Activated CD4-positive, alpha-beta T cell treated with anti-CD3 and anti-CD28 coated beads for 36 hours (primary cell): ENCODE measurements at regions of chr12 and their contacts with region 1.

Region 1: DNA sequence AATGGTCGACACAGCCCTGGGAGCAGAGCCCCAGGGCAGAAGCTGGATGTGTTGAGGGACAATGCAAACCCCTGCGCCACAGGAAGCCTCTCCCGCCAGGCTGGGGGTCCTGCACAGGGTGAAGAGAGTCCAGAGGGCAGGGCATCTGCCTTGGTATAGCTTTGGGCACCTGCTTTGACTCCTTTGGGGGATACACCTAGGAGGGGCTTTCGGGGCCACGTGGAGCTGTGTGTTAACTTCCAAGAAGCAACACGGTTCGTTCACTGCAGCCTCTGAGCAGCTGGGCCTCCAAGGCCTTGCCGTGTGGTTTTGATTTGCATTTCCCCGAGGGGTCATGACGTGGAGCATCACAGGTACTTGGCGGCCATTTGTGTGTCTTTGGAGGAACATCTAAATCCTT is 5.8 kb upstream of the PUS1 start:
- DNase-seq: no peak
- ATAC-seq: no peak
- H3K4me3 Mint-ChIP-seq: no peak overlapping the region
- H3K27ac Mint-ChIP-seq: no peak overlapping the region
- H3K4me1 Mint-ChIP-seq: peaks cover 7% of the 10 kb centered on the region
- H3K27me3 Mint-ChIP-seq: no peaks in the 10 kb centered on the region

Region 2: DNA sequence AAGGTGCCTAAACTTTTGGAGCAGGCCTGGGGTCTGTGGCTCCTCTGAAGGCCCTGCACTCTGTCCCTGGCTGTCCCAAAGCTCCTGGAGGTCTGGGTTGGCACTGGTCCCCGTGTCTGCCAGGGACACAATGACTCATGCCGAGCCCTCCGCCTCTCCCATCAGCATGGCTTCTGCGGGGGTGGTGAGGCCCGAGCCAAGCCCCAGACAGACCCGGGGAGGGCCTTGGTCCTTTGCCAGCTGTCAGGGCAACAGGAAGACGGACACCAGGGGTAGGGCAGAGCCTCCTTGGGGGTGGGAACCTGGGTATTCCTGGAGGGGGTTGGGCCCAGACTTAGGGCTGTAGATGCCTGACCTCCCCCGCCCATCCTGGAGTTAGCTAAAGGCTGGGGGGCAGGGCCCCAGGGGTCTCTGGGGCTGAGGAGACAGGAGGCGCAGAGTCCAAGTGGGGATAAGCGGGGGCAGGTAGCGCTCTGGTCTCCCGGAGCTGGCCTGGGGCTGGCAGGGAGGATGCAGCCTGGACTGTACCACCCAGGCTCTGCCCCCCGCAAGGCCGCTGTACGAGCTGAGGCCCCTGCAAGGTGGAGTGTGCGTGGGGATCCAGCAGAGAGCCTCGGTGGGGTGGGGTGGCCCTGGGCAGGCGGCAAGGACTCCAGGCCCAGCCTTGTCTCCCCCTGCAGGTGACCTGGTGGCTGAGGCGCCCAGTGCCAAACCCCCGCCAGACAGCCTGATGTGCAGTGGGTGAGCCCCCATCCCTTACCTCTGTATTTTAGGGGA is 10.6 kb before region 1 on chr12:
- CTCF ChIA-PET with region 1: no interaction called
- POLR2A ChIA-PET with region 1: no interaction called
- intact Hi-C with region 1: no loop called
- DNase-seq: no peak
- ATAC-seq: no peak
- H3K4me3 Mint-ChIP-seq: no peak overlapping the region
- H3K27ac Mint-ChIP-seq: no peak overlapping the region
- H3K4me1 Mint-ChIP-seq: no peaks in the 10 kb centered on the region
- H3K27me3 Mint-ChIP-seq: no peaks in the 10 kb centered on the region

Region 3: GRCh38 chr12:131959641-131960589 is 36.7 kb after region 1 on chr12:
- CTCF ChIA-PET with region 1: no interaction called
- POLR2A ChIA-PET with region 1: no interaction called
- intact Hi-C with region 1: loop called in 1 of 2 experiments (anchors 5 kb)
- DNase-seq: no peak
- ATAC-seq: no peak
- H3K4me3 Mint-ChIP-seq: no peak overlapping the region
- H3K27ac Mint-ChIP-seq: peak overlapping the region; percentile 40
- H3K4me1 Mint-ChIP-seq: peaks cover 66% of the 10 kb centered on the region
- H3K27me3 Mint-ChIP-seq: no peaks in the 10 kb centered on the region

Region 4: DNA sequence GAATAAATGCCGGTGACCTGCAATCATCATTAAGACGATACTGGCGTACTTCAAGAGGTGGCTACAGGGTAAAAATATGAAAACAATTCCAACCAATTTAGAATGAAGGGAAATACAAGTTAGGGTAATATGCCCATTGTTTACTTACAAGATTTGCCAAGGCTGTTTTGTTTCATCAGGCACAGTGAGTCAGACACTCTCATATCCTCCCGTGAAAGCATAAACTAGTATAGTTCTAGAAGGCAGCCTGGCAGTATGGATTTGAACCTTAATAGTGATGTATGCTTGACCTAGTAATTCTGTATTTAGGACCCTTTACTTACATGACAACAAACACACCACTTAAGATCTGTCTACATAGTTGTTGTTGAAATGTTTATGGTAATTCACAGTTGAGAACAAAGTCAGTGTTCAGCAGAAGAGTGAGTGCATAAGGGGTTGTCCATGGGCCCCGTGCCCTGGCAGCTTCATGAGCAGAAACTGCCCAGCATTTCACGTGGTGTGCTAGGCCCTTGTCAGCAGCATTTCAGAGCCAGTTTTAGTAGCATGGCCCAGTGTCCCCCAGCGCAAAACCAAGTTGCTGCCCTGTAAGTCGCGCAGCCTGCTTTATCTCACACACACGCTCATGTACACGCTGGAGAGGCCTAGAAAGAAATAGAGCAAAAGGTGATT is 107.2 kb after region 1 on chr12:
- CTCF ChIA-PET with region 1: no interaction called
- POLR2A ChIA-PET with region 1: no interaction called
- intact Hi-C with region 1: no loop called
- DNase-seq: no peak
- ATAC-seq: no peak
- H3K4me3 Mint-ChIP-seq: no peak overlapping the region
- H3K27ac Mint-ChIP-seq: peak overlapping the region; percentile 52
- H3K4me1 Mint-ChIP-seq: no peaks in the 10 kb centered on the region
- H3K27me3 Mint-ChIP-seq: no peaks in the 10 kb centered on the region